ENCODE measurements at regions of chr18 and their contacts with region 1.

Region 1: GRCh38 chr18:64752707-64753106 is 603.8 kb upstream of the LINC00305 start:
- DNase-seq: no peak
- ATAC-seq: no peak
- H3K4me3 ChIP-seq: no peak overlapping the region
- H3K27ac ChIP-seq: no peak overlapping the region
- H3K4me1 ChIP-seq: no peaks in the 10 kb centered on the region
- H3K27me3 ChIP-seq: no peaks in the 10 kb centered on the region
- CTCF ChIP-seq: no peak

Region 2: DNA sequence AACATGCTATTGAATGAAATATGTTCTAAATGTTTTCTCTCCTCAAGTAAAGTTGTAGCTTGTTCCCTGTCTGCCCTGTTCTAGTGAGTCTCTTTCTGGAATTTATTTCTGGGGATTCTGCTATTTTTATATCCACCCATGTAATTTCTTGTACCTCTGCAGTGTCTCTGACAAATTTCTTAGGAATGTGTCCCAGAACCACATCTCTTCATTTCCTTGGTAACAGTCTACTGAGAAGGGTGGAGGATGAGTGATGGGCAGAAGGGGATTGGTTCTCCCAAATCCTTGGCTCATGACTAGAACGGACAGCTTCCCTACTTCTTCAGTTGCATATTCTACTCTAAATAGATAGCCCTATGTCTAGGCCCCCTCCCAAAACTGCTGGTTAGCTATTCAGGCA is 113.2 kb before region 1 on chr18:
- intact Hi-C with region 1: no loop called
- DNase-seq: no peak
- ATAC-seq: no peak
- H3K4me3 ChIP-seq: no peak overlapping the region
- H3K27ac ChIP-seq: no peak overlapping the region
- H3K4me1 ChIP-seq: no peaks in the 10 kb centered on the region
- H3K27me3 ChIP-seq: no peaks in the 10 kb centered on the region
- CTCF ChIP-seq: no peak

Region 3: DNA sequence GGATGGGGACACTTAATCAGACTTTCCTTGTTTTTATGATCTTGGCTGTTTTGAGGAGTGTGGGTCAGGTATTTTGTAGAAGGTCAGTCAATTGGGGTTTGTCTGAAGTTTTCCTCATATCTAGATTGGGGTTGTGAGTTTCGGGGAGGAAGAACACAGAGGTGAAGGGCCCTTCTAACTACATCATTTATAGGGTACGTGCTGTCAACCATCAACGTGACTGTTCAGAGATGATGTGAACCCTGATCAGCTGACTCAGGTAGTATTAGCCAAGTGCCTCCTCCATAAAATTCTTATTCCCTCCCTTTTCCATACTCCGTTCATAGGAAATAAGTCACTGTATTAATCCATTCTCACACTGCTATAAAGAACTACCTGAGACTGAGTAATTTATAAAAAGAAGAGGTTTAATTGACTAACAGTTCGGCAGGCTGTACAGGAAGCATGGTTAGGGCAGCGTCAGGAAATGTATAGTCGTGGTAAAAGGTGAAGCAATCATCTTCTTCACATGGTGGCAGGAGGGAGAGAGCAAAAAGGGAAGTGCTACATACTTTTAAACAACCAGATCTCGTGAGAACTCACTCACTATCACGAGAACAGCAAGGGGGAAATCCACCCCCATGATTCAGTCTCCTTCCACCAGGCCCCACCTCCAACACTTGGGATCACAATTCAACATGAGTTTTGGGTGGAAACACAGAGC is 56.7 kb before region 1 on chr18:
- intact Hi-C with region 1: loop called in 1 of 2 experiments (anchors 10 kb)
- DNase-seq: no peak
- ATAC-seq: no peak
- H3K4me3 ChIP-seq: no peak overlapping the region
- H3K27ac ChIP-seq: no peak overlapping the region
- H3K4me1 ChIP-seq: no peaks in the 10 kb centered on the region
- H3K27me3 ChIP-seq: no peaks in the 10 kb centered on the region
- CTCF ChIP-seq: no peak

Region 4: DNA sequence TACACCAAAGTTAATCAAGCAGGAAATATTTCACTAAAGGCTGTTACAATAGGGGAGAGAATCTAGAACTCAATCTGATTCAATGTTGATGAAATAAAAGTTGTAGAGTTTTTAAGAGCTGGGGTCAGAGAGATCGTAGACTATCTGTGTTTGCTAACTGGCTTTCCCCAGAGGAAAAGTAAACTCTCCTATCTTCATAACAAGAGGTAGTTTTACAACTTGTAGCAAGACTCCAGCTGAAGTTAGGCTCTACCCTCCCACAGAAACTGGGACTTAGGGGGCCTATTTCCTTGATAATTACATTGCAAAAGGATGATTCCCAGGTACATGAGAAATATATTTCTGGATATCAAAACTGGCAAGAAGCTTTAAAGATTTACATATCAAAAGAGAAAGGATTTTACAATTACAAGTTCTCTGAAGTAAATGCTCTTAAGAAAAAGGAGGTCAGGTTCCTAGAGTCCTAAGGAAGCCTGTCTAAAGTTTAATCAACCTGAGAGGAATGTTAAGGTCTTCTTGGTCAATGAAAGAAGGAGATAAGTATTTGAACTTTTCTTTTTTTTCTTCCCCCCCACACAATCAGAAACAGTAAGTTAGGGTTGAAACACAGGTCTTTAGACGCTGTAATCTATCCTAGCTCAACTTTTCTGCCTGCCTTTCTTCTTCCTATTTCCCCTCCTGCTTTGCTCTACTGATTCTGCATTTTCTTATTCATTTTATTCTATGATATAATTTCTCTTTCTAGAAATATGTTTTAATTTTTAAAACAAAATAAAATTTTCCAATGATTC is 88.4 kb after region 1 on chr18:
- intact Hi-C with region 1: no loop called
- DNase-seq: no peak
- ATAC-seq: no peak
- H3K4me3 ChIP-seq: no peak overlapping the region
- H3K27ac ChIP-seq: no peak overlapping the region
- H3K4me1 ChIP-seq: no peaks in the 10 kb centered on the region
- H3K27me3 ChIP-seq: no peaks in the 10 kb centered on the region
- CTCF ChIP-seq: no peak